ENCODE measurements at regions of chr11 and their contacts with region 1.

Region 1: GRCh38 chr11:65919146-65920033 is at the start of gene DRAP1:
- DNase-seq: peak; percentile 93 to 99
- H3K4me3 ChIP-seq: peak within 1 kb of the TSS; percentile 79 to 98
- H3K27ac ChIP-seq: peak within 1 kb of the TSS; percentile 96 to 98
- H3K4me1 ChIP-seq: peaks cover 43 to 45% of the 10 kb centered on the region in 2 donors
- H3K27me3 ChIP-seq: no peaks in the 10 kb centered on the region
- CTCF ChIP-seq: peak in 1 of 3 experiments; percentile 2
- total RNA-seq, gene DRAP1: 135 TPM

Region 2: DNA sequence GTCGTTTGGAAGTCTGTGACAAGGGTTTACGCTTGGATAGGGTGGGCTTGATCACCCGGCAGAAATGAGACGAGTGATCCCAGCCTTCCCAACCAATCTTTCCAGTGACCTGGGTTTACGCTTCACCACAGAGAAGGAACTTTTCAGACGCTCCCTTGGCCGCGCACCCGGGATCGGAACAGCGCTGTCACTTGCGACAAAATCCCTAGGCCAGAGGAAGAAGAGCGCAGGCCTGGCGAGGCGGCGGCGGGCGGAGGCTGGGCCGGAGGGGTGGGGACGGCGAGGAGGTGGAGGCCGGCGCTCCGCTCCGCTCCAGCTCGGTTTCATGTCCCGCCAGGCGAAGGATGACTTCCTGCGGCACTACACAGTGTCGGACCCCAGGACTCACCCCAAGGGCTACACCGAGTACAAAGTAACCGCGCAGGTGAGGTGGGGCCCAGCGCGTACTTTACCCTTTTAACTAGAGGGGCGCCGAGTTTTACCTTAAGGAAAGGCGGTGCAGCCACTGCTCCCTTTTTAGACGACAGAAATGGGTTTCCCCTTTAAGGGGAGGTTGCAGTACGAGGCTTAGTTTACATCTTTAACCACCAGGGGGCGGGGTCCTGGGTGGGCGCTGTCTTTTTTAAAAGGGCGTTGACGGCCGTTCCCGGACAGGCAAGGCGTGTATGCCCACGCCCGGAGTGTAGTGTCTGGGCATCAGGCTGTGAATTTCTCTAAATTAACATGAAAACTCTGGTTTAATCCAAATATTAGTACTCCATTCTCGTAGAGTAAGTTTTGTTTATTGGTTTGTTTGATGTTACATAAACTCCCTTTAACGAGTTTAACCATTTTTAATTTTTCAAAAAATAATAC is 892.0 kb before region 1 on chr11 and contains the start of gene SNX15:
- intact Hi-C with region 1: loop called (anchors 2 kb)
- DNase-seq: peak; percentile 72 to 96
- H3K4me3 ChIP-seq: peak within 1 kb of the TSS; percentile 54 to 64
- H3K27ac ChIP-seq: peak within 1 kb of the TSS; percentile 66 to 83
- H3K4me1 ChIP-seq: peaks cover 4 to 11% of the 10 kb centered on the region in 2 donors
- H3K27me3 ChIP-seq: no peaks in the 10 kb centered on the region
- CTCF ChIP-seq: peak; percentile 61 to 85 (median 78)
- total RNA-seq, gene SNX15: 25.1 TPM

Region 3: GRCh38 chr11:65711785-65712632 is 207.4 kb before region 1 on chr11 and contains the start of gene KAT5:
- intact Hi-C with region 1: loop called (anchors 1 kb)
- DNase-seq: peak; percentile 96 to 99
- H3K4me3 ChIP-seq: peak within 1 kb of the TSS; percentile 72 to 94
- H3K27ac ChIP-seq: peak within 1 kb of the TSS; percentile 96 to 100
- H3K4me1 ChIP-seq: peaks cover 4 to 19% of the 10 kb centered on the region in 2 donors
- H3K27me3 ChIP-seq: no peaks in the 10 kb centered on the region
- CTCF ChIP-seq: peak; percentile 95 to 99 (median 98)
- total RNA-seq, gene KAT5: 31.0 TPM

Region 4: GRCh38 chr11:65888163-65888814 is 31.1 kb before region 1 on chr11 and contains the start of gene FIBP:
- intact Hi-C with region 1: loop called (anchors 1 kb)
- DNase-seq: peak; percentile 90 to 99
- H3K4me3 ChIP-seq: peak within 1 kb of the TSS; percentile 82 to 85
- H3K27ac ChIP-seq: peak within 1 kb of the TSS; percentile 98
- H3K4me1 ChIP-seq: peaks cover 20 to 28% of the 10 kb centered on the region in 2 donors
- H3K27me3 ChIP-seq: no peaks in the 10 kb centered on the region
- CTCF ChIP-seq: peak; percentile 84 to 98 (median 96)
- total RNA-seq, gene FIBP: 57.2 TPM

Region 5: DNA sequence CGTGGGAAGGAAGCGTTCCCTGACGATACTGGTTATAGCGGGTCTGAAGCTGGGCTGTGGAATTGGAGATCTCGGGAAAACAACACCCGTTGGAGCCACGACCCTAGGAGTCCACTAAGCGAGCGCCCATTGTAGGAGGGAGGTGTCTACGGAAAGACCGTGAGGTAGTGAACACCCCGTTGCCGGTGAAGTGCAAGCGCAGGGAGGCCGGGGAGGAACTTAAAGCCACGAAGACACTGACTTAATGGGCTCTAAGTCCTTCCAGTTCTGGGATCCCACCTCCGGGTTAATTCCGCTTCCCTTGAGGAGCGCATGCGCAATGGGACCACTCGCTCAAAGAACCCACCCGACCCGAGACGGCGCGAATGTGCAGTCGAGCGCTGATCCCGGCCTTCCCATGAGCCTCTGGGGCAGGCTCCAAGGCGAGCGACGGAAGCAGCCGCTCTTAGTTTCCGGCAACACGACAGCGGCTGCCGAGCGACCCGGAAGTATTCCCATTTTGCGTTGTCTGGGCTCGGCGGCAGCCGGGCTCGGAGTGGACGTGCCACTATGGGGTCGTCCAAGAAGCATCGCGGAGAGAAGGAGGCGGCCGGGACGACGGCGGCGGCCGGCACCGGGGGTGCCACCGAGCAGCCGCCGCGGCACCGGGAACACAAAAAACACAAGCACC is 42.0 kb after region 1 on chr11 and contains the start of gene SART1:
- intact Hi-C with region 1: loop called (anchors 1 kb)
- DNase-seq: peak; percentile 86 to 99
- H3K4me3 ChIP-seq: peak within 1 kb of the TSS; percentile 89 to 100
- H3K27ac ChIP-seq: peak within 1 kb of the TSS; percentile 86 to 96
- H3K4me1 ChIP-seq: peaks cover 15 to 23% of the 10 kb centered on the region in 2 donors
- H3K27me3 ChIP-seq: no peaks in the 10 kb centered on the region
- CTCF ChIP-seq: peak in 1 of 3 experiments; percentile 13
- total RNA-seq, gene SART1: 28.4 TPM

Region 6: GRCh38 chr11:66081505-66081904 is 162.1 kb after region 1 on chr11:
- intact Hi-C with region 1: no loop called
- DNase-seq: peak in 1 of 2 donors; percentile 72
- H3K4me3 ChIP-seq: no peak overlapping the region
- H3K27ac ChIP-seq: peak overlapping the region; percentile 53 to 74
- H3K4me1 ChIP-seq: peaks cover 11 to 47% of the 10 kb centered on the region in 2 donors
- H3K27me3 ChIP-seq: no peaks in the 10 kb centered on the region
- CTCF ChIP-seq: no peak